ENCODE measurements at regions of chr2 and their contacts with region 1.

Region 1: DNA sequence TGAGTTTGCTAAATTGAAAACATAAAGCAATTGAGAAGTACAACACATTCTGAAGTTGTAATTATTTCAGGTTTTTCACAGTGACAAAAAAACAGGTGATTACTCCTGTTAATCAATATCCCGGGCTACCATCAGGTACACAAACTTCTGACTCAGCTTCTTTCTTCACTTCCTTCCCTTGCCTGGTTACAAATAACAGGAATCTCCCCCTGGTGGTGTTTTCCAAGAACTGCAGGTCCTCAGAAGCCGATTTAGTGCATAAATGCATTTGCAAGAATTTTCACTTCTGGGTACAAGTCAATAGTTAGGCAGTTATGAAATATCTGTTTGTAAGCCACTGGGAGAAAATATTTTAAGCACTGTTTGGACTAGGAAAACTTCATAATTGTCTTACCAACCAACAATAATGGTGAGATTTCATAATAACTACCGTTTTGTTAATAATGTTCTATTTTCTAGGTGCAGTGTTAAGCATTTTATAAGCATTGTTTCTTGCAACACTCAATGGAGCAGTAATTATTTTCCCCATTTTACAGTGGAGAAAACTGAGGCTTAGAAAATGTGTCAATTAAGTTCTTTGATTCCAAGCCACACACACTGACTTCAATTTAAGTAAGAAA is 12.4 kb upstream of the GMCL1 start:
- DNase-seq: peak; percentile 66
- H3K4me3 Mint-ChIP-seq: no peak overlapping the region
- H3K27ac Mint-ChIP-seq: no peak overlapping the region
- H3K4me1 Mint-ChIP-seq: peaks cover 11% of the 10 kb centered on the region
- H3K27me3 Mint-ChIP-seq: no peaks in the 10 kb centered on the region

Region 2: DNA sequence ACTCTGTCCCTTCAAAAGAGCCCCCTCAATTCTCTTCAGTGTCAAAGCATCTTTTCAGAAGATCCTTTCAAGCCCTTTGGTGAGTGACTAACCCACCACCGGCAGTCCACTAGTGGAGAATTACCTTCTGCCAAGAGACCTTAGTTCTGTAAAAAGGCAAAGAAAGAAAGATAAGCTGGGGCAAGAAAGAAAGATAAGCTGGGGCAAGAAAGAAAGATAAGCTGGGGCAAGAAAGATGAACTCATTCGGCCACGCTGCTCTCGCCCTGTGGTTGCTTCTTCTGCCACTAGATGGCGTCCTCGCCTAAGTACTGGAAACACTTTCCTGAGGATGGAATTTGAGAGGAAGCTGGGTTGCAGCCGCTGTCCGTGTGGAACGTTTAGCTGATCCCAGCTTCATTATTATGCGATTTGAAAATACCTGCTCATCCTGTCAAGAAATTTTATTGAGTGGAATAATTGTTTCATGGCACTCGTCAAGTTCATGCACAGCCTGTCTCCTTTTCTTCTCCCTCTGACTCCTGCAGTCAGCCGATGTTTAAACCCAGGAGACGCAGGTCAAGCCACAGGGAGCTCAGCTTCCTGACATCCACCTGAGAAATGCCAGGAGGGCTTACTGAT is 92.4 kb before region 1 on chr2:
- intact Hi-C with region 1: loop called (anchors 1 kb)
- DNase-seq: peak; percentile 79
- H3K4me3 Mint-ChIP-seq: peak overlapping the region; percentile 39
- H3K27ac Mint-ChIP-seq: no peak overlapping the region
- H3K4me1 Mint-ChIP-seq: peaks cover 10% of the 10 kb centered on the region
- H3K27me3 Mint-ChIP-seq: no peaks in the 10 kb centered on the region

Region 3: GRCh38 chr2:69741619-69742466 is 75.2 kb before region 1 on chr2 and contains the start of gene ANXA4:
- intact Hi-C with region 1: loop called (anchors 1 kb)
- DNase-seq: peak; percentile 65
- H3K4me3 Mint-ChIP-seq: peak within 1 kb of the TSS; percentile 92
- H3K27ac Mint-ChIP-seq: peak within 1 kb of the TSS; percentile 89
- H3K4me1 Mint-ChIP-seq: peaks cover 28% of the 10 kb centered on the region
- H3K27me3 Mint-ChIP-seq: peaks cover 12% of the 10 kb centered on the region
- total RNA-seq, gene ANXA4: 45.6 and 52.9 TPM in 2 replicates

Measured in activated T-helper 2 cell treated with anti-CD3 and anti-CD28 coated beads, Interferon-gamma antibody, Interleukin-2, Interleukin-4, amounts not matched to agents 10 μg/mL and 5 μg/mL and 100 μg/mL, durations not matched to agents 14 hours and 24 hours and 36 hours (primary cell).